Upper lobe of right lung (tissue), 1 donor: ENCODE measurements at regions of chr1 and their contacts with region 1.

Region 1: GRCh38 chr1:212070720-212071302 is 35.3 kb downstream of the DTL start:
- DNase-seq: no peak
- ATAC-seq: peak; percentile 89
- H3K4me3 ChIP-seq: no peak overlapping the region
- H3K27ac ChIP-seq: no peak overlapping the region
- H3K4me1 ChIP-seq: peaks cover 7% of the 10 kb centered on the region
- H3K27me3 ChIP-seq: no peaks in the 10 kb centered on the region
- CTCF ChIP-seq: peak; percentile 85

Region 2: DNA sequence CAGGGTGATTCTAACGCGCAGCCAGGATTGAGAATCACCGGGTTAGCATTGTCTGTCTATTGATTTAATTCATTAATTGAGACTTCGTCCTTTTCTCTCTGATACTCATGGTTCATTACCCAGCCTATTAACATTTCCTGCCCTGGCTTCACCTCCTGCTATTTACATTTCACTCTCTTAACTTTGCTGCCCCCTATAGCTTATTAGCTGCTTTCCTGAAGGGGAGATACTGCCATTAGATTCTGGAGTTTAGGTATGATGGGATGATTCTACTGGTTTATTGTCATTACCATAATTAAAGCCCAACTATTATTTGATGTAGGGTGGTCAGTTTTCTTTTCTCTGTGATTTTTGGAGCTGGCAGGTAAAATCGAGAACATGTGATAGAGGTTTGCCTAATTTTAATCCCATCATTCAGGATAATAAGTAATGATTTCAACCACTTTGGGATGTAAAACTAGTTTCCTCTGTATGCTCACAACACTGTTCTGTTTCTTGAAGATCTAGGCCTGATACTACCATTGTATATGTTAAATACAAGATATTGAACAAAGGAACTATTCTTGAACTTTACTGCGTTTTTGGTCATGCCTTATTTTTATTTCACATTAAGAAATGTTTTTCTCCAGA is 220.8 kb after region 1 on chr1:
- intact Hi-C with region 1: loop called (anchors 10 kb)
- DNase-seq: no peak
- ATAC-seq: peak; percentile 87
- H3K4me3 ChIP-seq: no peak overlapping the region
- H3K27ac ChIP-seq: no peak overlapping the region
- H3K4me1 ChIP-seq: peaks cover 62% of the 10 kb centered on the region
- H3K27me3 ChIP-seq: no peaks in the 10 kb centered on the region
- CTCF ChIP-seq: peak; percentile 66